ENCODE measurements at regions of chr15 and their contacts with region 1.

Region 1: DNA sequence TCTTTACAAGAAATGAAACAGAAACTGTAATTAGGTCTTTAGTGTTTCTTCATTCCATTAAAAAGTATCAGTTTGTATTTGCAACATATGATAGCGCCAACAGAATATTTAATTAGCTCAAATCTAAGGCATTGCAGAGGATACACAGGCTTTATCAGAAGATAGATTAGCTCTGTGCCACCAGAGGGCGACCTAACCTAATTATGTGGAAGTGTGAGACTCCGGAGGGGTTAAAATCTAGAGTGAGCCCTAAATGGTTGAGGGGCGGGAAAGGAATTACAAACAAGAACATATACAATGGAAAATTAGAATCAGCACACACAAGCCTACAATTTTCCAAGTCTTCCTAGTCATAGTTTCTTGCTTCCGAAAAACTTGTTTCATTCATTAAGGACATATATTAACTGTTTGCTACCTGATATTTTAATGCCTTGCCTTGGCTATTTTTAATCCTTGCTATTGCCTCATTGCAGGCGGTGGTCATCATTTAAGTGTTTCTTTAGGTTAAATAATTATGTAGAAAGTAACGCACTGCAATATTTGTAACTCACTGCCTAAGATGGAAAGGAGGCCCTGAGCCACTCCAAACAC is 18.0 kb upstream of the RYR3 start:
- DNase-seq: no peak
- H3K4me3 Mint-ChIP-seq: no peak overlapping the region
- H3K27ac Mint-ChIP-seq: no peak overlapping the region
- H3K4me1 Mint-ChIP-seq: no peaks in the 10 kb centered on the region
- H3K27me3 Mint-ChIP-seq: no peaks in the 10 kb centered on the region

Region 2: GRCh38 chr15:33675246-33675645 is 382.4 kb after region 1 on chr15:
- intact Hi-C with region 1: loop called (anchors 10 kb)
- DNase-seq: no peak
- H3K4me3 Mint-ChIP-seq: no peak overlapping the region
- H3K27ac Mint-ChIP-seq: no peak overlapping the region
- H3K4me1 Mint-ChIP-seq: no peaks in the 10 kb centered on the region
- H3K27me3 Mint-ChIP-seq: peaks cover 5% of the 10 kb centered on the region

Region 3: GRCh38 chr15:33700695-33701304 is 408.0 kb after region 1 on chr15:
- intact Hi-C with region 1: loop called (anchors 10 kb)
- DNase-seq: peak; percentile 36
- H3K4me3 Mint-ChIP-seq: no peak overlapping the region
- H3K27ac Mint-ChIP-seq: no peak overlapping the region
- H3K4me1 Mint-ChIP-seq: no peaks in the 10 kb centered on the region
- H3K27me3 Mint-ChIP-seq: peaks cover 2% of the 10 kb centered on the region

Measured in activated T-helper 2 cell treated with anti-CD3 and anti-CD28 coated beads, Interferon-gamma antibody, Interleukin-2, Interleukin-4, amounts not matched to agents 10 μg/mL and 5 μg/mL and 100 μg/mL, durations not matched to agents 14 hours and 24 hours and 36 hours (primary cell).